Breast epithelium (tissue), 4 donors: ENCODE measurements at regions of chr9 and their contacts with region 1.

Region 1: GRCh38 chr9:124803911-124804310 is 27.0 kb downstream of the OLFML2A start:
- DNase-seq: no peak
- H3K4me3 ChIP-seq: no peak overlapping the region
- H3K27ac ChIP-seq: no peak overlapping the region
- H3K4me1 ChIP-seq: no peaks in the 10 kb centered on the region
- H3K27me3 ChIP-seq: no peaks in the 10 kb centered on the region
- CTCF ChIP-seq: no peak
- POLR2A ChIP-seq: no peak

Region 2: DNA sequence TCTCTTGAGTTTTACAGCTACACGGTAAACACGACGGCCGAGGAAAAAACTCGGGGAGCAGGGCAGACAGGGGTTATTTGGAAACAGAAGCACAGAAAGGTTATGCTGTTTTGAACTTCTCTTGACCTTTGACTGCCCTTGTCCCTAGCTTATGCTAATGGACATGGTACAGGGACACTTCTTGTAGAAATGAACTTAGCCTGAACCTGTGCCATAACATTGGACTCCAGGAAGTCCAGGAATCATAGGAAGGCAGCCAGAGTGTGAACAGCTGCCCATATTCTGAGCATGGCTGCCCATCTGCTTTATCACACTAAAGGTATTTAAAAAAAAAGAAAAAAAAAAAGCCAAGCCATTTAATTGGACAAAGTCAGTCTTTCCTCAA is 78.9 kb before region 1 on chr9:
- intact Hi-C with region 1: no loop called
- DNase-seq: no peak
- H3K4me3 ChIP-seq: no peak overlapping the region
- H3K27ac ChIP-seq: peak overlapping the region; percentile 22
- H3K4me1 ChIP-seq: no peaks in the 10 kb centered on the region
- H3K27me3 ChIP-seq: no peaks in the 10 kb centered on the region
- CTCF ChIP-seq: no peak
- POLR2A ChIP-seq: no peak

Region 3: DNA sequence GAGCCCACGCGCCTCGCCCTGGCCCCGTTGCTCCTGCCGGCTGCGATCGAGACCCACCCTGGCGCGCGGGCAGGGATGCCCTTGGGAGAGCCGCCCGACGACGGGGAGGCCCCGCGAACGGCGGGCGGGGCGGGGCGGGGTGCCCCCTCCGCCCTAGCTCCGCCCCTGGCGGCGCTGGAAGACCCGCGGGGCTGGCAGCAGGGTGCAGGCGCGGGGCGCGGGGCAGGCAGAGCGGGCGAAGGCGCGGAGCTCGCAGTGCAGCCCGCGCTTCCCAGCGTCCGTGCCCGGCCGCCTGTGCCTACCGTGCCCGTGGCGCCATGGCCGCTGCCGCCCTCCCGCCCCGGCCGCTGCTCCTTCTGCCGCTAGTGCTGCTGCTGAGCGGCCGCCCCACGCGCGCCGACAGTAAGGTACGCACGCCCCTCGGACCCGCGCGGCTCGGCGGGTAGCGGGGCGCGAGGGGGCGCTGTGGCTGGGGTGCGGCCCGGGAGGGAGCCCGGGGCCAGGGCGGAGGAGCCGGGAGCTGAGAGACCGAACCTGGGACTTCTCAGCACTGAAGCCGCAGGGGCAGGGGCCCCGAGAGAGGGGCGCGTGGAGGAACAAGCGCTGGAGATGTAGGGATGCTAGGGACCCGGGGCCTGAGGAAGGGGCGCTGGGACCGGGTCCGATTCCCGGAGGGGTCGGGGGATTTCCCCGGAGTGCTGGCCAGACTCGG is 26.8 kb before region 1 on chr9 and contains the start of gene OLFML2A:
- intact Hi-C with region 1: loop called (anchors 1 kb)
- DNase-seq: peak in 1 of 2 donors; percentile 51
- H3K4me3 ChIP-seq: peak within 1 kb of the TSS; percentile 57 to 88 (median 70)
- H3K27ac ChIP-seq: peak within 1 kb of the TSS; percentile 67 to 84
- H3K4me1 ChIP-seq: peaks cover 6 to 9% of the 10 kb centered on the region in 2 donors
- H3K27me3 ChIP-seq: no peaks in the 10 kb centered on the region
- CTCF ChIP-seq: peak in 1 of 3 donors; percentile 31
- POLR2A ChIP-seq: no peak
- total RNA-seq, gene OLFML2A: 11.4 to 25.2 (median 11.4) TPM